Heart left ventricle (tissue), 16 donors: ENCODE measurements at regions of chr11 and their contacts with region 1.

Region 1: DNA sequence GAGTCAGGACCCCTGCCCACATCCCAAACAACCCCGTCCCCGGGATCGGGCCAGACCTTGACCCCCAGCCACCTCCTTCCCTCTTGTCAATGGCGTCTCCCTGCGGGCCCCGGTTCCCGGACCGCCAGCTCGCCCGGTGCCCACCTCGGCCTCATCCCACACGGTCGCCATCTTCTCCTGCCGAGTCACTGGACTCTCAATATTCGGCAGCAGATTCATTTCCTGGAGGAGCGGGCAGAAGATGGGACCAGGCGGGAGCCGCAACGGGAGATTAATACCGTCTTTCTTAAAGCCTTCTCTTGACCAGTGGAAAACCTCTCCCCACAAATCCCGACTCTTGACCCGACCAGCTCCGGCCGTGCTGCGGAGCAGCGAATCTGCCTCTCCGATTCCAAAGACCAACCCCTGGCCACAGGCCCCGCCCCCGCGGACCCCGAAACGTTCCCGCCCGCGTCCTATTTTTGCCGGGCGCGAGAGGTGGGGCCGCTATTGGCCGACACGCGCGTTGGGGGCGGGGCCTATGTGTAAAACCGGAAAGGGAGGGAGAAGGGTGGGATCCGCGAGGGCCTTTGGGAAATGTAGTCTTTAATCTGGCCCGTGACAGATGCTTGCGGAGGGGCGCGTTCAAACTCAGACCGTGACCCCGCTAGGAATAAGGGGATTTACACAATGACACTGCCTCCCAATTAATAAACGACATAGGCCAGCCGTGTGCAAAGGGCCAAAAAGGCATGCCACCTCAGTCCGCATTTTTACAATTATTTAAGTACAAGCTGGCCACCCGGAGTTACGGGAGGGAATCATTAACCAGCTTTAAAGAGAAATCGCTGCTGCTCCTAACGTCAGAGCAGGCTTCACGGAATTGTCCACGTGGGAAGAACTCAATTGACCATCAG is at the start of gene PSMC3:
- DNase-seq: peak; percentile 98 to 99 (median 99)
- ATAC-seq: peak; percentile 95 to 99 (median 97)
- H3K4me3 ChIP-seq: peak within 1 kb of the TSS; percentile 69 to 97 (median 84)
- H3K27ac ChIP-seq: peak within 1 kb of the TSS; percentile 81 to 96 (median 92)
- H3K4me1 ChIP-seq: peaks cover 5 to 25% (median 14%) of the 10 kb centered on the region in 12 donors
- H3K27me3 ChIP-seq: no peaks in the 10 kb centered on the region
- CTCF ChIP-seq: peak in 1 of 12 donors; percentile 5
- POLR2A ChIP-seq: peak in 1 of 2 donors; percentile 55
- total RNA-seq, gene PSMC3: 121 to 215 (median 151) TPM

Region 2: GRCh38 chr11:47361419-47361818 is 64.9 kb before region 1 on chr11:
- intact Hi-C with region 1: no loop called
- DNase-seq: peak in 2 of 5 donors; percentile 19 to 21
- ATAC-seq: no peak
- H3K4me3 ChIP-seq: no peak overlapping the region
- H3K27ac ChIP-seq: peak overlapping the region in 7 of 12 donors; percentile 26 to 70 (median 47)
- H3K4me1 ChIP-seq: peaks cover 0 to 45% (median 0%) of the 10 kb centered on the region in 12 donors
- H3K27me3 ChIP-seq: no peaks in the 10 kb centered on the region
- CTCF ChIP-seq: no peak
- POLR2A ChIP-seq: no peak

Region 3: GRCh38 chr11:47407746-47408590 is 18.3 kb before region 1 on chr11 and contains the start of gene SLC39A13:
- intact Hi-C with region 1: loop called in 2 of 10 experiments (anchors 1 to 2 kb)
- DNase-seq: peak; percentile 95 to 98 (median 96)
- ATAC-seq: peak; percentile 80 to 92 (median 90)
- H3K4me3 ChIP-seq: peak within 1 kb of the TSS; percentile 48 to 91 (median 80)
- H3K27ac ChIP-seq: peak within 1 kb of the TSS; percentile 83 to 98 (median 93)
- H3K4me1 ChIP-seq: peaks cover 0 to 45% (median 28%) of the 10 kb centered on the region in 12 donors
- H3K27me3 ChIP-seq: no peaks in the 10 kb centered on the region
- CTCF ChIP-seq: peak; percentile 74 to 97 (median 86)
- POLR2A ChIP-seq: peak in 1 of 2 donors; percentile 96
- total RNA-seq, gene SLC39A13: 33.5 to 82.8 (median 45.3) TPM